ENCODE measurements at regions of chr7 and their contacts with region 1.

Region 1: GRCh38 chr7:32846701-32847100 is 44.9 kb downstream of the KBTBD2 start:
- DNase-seq: peak; percentile 51
- ATAC-seq: peak; percentile 100
- H3K4me3 ChIP-seq: no peak overlapping the region
- H3K27ac ChIP-seq: no peak overlapping the region
- H3K4me1 ChIP-seq: no peaks in the 10 kb centered on the region; the same call in 1 of the 2 replicates
- H3K27me3 ChIP-seq: no peaks in the 10 kb centered on the region
- CTCF ChIP-seq: peak; percentile 77 to 84 (median 81)
- EP300 ChIP-seq: no peak
- POLR2A ChIP-seq: no peak
- RAD21 ChIP-seq: peak; percentile 55

Region 2: DNA sequence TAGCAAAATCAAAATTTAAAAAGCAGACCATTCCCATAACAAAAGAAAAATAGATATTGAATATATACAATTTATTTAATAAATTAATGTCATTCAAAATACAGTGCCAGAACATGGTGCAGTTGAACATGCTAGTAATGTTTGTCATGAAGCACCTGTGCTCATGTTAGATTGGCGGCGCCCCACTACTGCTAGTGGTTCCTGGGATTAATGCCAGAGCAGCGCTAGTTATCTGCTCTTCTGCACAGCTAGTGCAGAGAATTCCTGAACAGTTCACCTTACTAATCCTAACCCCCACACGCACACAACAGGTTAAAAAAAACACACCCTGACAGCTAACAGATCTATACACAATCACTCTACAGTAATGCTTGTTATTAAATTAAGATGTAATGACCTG is 21.4 kb after region 1 on chr7:
- CTCF ChIA-PET with region 1: interaction called, 18 read pairs
- POLR2A ChIA-PET with region 1: no interaction called
- RAD21 ChIA-PET with region 1: interaction called, 3 read pairs
- SMC1A ChIA-PET with region 1: interaction called, 3 read pairs
- in situ Hi-C with region 1: no loop called
- intact Hi-C with region 1: no loop called
- DNase-seq: no peak
- ATAC-seq: no peak
- H3K4me3 ChIP-seq: no peak overlapping the region
- H3K27ac ChIP-seq: no peak overlapping the region
- H3K4me1 ChIP-seq: peaks cover 7% of the 10 kb centered on the region; the same call in 1 of the 2 replicates
- H3K27me3 ChIP-seq: no peaks in the 10 kb centered on the region
- CTCF ChIP-seq: no peak
- EP300 ChIP-seq: no peak
- POLR2A ChIP-seq: no peak
- RAD21 ChIP-seq: no peak

Region 3: DNA sequence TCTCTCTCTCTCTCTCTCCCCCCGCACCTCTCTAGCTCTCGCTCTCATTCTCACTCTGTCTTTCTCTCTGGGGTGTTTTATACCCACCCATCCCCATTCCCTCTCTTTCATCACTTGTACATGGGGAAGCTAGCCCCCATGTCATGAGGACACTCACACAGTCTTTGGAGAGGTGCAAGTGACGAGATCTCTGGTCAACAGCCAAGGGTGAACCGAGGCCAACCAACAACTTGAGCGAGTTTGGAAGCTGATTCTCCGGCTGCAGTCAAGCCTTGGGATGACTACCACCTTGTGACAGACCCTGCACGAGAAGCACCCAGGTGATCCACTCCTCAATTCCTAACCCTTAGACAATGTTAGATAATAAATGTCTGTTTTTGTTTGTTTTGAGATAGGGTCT is 54.9 kb after region 1 on chr7:
- CTCF ChIA-PET with region 1: interaction called, 13 read pairs
- POLR2A ChIA-PET with region 1: no interaction called
- RAD21 ChIA-PET with region 1: no interaction called
- SMC1A ChIA-PET with region 1: interaction called, 3 read pairs
- in situ Hi-C with region 1: no loop called
- intact Hi-C with region 1: no loop called
- DNase-seq: no peak
- ATAC-seq: no peak
- H3K4me3 ChIP-seq: no peak overlapping the region
- H3K27ac ChIP-seq: no peak overlapping the region
- H3K4me1 ChIP-seq: no peaks in the 10 kb centered on the region
- H3K27me3 ChIP-seq: no peaks in the 10 kb centered on the region
- CTCF ChIP-seq: no peak
- EP300 ChIP-seq: no peak
- POLR2A ChIP-seq: no peak
- RAD21 ChIP-seq: no peak

Region 4: DNA sequence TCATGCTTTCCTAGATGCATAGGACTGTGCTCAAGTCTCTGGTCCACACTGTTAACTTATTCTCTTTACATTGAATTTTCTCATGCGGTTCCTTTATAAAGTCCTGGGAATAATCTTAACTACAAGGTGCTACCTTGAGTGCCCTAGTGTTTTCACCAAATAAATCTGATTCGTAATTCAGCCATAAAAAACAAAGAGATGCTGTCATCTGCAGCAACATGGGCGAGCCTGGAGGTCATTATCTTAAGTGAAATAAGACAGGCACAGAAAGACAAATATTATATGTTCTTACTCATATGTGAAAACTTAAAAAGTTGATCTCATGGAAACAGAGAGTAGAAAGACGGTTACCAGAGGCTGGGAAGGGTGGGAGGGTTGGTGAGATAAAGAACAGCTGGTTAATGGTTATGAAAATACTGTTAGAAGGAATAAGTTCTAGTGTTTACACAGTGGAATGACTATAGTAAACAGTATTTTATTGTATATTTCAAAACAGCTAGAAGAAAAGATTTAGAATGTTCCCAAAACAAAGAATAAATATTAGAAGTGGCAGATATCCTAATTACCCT is 177.6 kb after region 1 on chr7:
- CTCF ChIA-PET with region 1: interaction called, 10 read pairs
- POLR2A ChIA-PET with region 1: no interaction called
- RAD21 ChIA-PET with region 1: interaction called, 4 read pairs
- SMC1A ChIA-PET with region 1: interaction called, 3 read pairs
- in situ Hi-C with region 1: no loop called
- intact Hi-C with region 1: no loop called
- DNase-seq: no peak
- ATAC-seq: no peak
- H3K4me3 ChIP-seq: no peak overlapping the region
- H3K27ac ChIP-seq: no peak overlapping the region
- H3K4me1 ChIP-seq: no peaks in the 10 kb centered on the region
- H3K27me3 ChIP-seq: no peaks in the 10 kb centered on the region
- CTCF ChIP-seq: no peak
- EP300 ChIP-seq: no peak
- POLR2A ChIP-seq: no peak
- RAD21 ChIP-seq: no peak

Region 5: GRCh38 chr7:33076737-33077136 is 230.0 kb after region 1 on chr7:
- CTCF ChIA-PET with region 1: interaction called, 12 read pairs
- POLR2A ChIA-PET with region 1: no interaction called
- RAD21 ChIA-PET with region 1: no interaction called
- SMC1A ChIA-PET with region 1: no interaction called
- in situ Hi-C with region 1: no loop called
- intact Hi-C with region 1: no loop called
- DNase-seq: no peak
- ATAC-seq: no peak
- H3K4me3 ChIP-seq: no peak overlapping the region
- H3K27ac ChIP-seq: no peak overlapping the region
- H3K4me1 ChIP-seq: no peaks in the 10 kb centered on the region
- H3K27me3 ChIP-seq: peaks cover 0 to 2% of the 10 kb centered on the region in 2 experiments; a peak in 2 of 4 replicates
- CTCF ChIP-seq: no peak
- EP300 ChIP-seq: no peak
- POLR2A ChIP-seq: no peak
- RAD21 ChIP-seq: no peak